ENCODE measurements at regions of chr9 and their contacts with region 1.

Region 1: GRCh38 chr9:108953983-108954574 is 19.9 kb downstream of the ABITRAM start:
- DNase-seq: peak; percentile 62
- ATAC-seq: no peak
- H3K4me3 ChIP-seq: no peak overlapping the region
- H3K4me3 Mint-ChIP-seq: no peak overlapping the region
- H3K27ac ChIP-seq: no peak overlapping the region
- H3K27ac Mint-ChIP-seq: no peak overlapping the region
- H3K4me1 ChIP-seq: no peaks in the 10 kb centered on the region
- H3K4me1 Mint-ChIP-seq: no peaks in the 10 kb centered on the region
- H3K27me3 ChIP-seq: no peaks in the 10 kb centered on the region
- H3K27me3 Mint-ChIP-seq: no peaks in the 10 kb centered on the region
- CTCF ChIP-seq: peak; percentile 86

Region 2: GRCh38 chr9:107465467-107466451 is 1488.3 kb before region 1 on chr9:
- CTCF ChIA-PET with region 1: interaction called, 12 read pairs
- POLR2A ChIA-PET with region 1: no interaction called
- intact Hi-C with region 1: no loop called
- DNase-seq: peak; percentile 64
- ATAC-seq: peak; percentile 84
- H3K4me3 ChIP-seq: peak overlapping the region; percentile 25 to 59 (median 47)
- H3K4me3 Mint-ChIP-seq: peak overlapping the region; percentile 80
- H3K27ac ChIP-seq: no peak overlapping the region
- H3K27ac Mint-ChIP-seq: no peak overlapping the region
- H3K4me1 ChIP-seq: peaks cover 13 to 15% of the 10 kb centered on the region in 2 donors
- H3K4me1 Mint-ChIP-seq: peaks cover 13% of the 10 kb centered on the region
- H3K27me3 ChIP-seq: peaks cover 0 to 25% (median 17%) of the 10 kb centered on the region in 4 experiments
- H3K27me3 Mint-ChIP-seq: peaks cover 39% of the 10 kb centered on the region
- CTCF ChIP-seq: peak; percentile 78

Region 3: GRCh38 chr9:108468402-108468801 is 485.7 kb before region 1 on chr9:
- CTCF ChIA-PET with region 1: no interaction called
- POLR2A ChIA-PET with region 1: no interaction called
- intact Hi-C with region 1: loop called (anchors 5 kb)
- DNase-seq: no peak
- ATAC-seq: no peak
- H3K4me3 ChIP-seq: no peak overlapping the region
- H3K4me3 Mint-ChIP-seq: no peak overlapping the region
- H3K27ac ChIP-seq: no peak overlapping the region
- H3K27ac Mint-ChIP-seq: no peak overlapping the region
- H3K4me1 ChIP-seq: no peaks in the 10 kb centered on the region
- H3K4me1 Mint-ChIP-seq: no peaks in the 10 kb centered on the region
- H3K27me3 ChIP-seq: no peaks in the 10 kb centered on the region
- H3K27me3 Mint-ChIP-seq: peaks cover 4% of the 10 kb centered on the region
- CTCF ChIP-seq: peak; percentile 9

Region 4: DNA sequence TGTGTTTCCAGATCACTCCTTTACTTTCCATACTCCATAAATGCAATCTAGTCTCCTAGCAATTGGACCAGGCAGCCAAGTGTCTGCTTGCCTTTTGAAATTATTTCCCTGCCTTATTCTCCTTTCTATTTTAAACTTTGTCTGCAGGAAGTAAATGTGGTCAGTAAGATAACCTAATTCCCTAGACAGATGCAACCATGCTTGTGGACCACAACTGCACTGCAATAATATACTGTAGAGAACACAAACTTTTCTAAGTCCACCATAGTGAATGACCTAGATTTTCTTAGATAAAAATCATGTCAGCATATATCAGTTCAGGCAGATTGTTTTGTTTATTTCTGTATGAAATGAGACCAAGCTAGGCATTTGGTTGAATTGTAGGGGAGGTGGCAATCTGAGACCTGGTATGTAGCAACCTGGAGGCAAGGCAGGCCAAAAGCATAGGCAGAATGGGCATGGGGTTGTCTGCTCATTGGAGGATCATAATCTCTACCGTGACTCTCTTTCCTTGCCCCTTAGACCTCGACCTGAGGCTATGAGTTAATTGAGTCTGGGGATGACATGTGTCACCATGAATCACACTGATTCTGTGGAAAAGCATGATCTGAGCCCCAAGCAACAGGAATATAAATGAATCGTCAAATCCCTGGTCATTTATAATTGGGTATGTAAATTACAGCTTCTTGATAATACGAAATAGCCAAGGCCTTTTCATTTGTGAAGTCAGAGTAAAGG is 119.0 kb before region 1 on chr9:
- CTCF ChIA-PET with region 1: no interaction called
- POLR2A ChIA-PET with region 1: no interaction called
- intact Hi-C with region 1: no loop called
- DNase-seq: no peak
- ATAC-seq: peak; percentile 28
- H3K4me3 ChIP-seq: no peak overlapping the region
- H3K4me3 Mint-ChIP-seq: peak overlapping the region; percentile 40
- H3K27ac ChIP-seq: no peak overlapping the region
- H3K27ac Mint-ChIP-seq: no peak overlapping the region
- H3K4me1 ChIP-seq: peaks cover 21 to 23% of the 10 kb centered on the region in 2 donors
- H3K4me1 Mint-ChIP-seq: peaks cover 24% of the 10 kb centered on the region
- H3K27me3 ChIP-seq: no peaks in the 10 kb centered on the region
- H3K27me3 Mint-ChIP-seq: peaks cover 5% of the 10 kb centered on the region
- CTCF ChIP-seq: no peak

Region 5: DNA sequence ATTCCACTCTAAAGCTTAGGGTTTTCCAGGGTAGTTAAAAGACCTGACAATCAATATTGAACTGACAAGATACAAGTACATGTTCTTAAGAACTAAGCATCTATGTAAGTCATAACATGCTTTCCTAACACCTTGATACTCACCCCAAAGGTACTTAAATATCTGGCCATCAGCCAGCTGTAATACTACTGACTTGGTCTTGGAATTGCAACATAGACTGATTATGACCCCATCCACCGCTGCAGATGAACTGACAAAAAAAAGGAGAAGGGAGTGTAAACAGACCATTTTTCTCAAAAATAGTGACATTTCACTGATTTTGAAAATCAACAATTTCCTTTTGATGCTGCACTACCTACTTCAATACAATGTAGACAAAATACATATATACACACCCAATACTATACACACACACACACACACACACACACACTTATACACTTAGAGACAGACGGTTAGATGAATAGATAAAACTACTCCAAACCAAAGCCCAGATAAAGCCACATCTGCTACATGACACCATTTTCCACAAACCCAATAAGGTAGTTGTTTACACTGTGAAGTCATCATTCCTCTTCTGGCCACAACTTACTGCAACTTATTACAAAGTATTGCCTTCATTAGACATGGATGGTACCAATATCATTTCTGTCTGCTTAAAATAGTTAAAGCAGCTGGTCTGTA is 50.5 kb before region 1 on chr9:
- CTCF ChIA-PET with region 1: no interaction called
- POLR2A ChIA-PET with region 1: no interaction called
- intact Hi-C with region 1: no loop called
- DNase-seq: no peak
- ATAC-seq: no peak
- H3K4me3 ChIP-seq: no peak overlapping the region
- H3K4me3 Mint-ChIP-seq: no peak overlapping the region
- H3K27ac ChIP-seq: no peak overlapping the region
- H3K27ac Mint-ChIP-seq: peak overlapping the region; percentile 3
- H3K4me1 ChIP-seq: no peaks in the 10 kb centered on the region
- H3K4me1 Mint-ChIP-seq: no peaks in the 10 kb centered on the region
- H3K27me3 ChIP-seq: no peaks in the 10 kb centered on the region
- H3K27me3 Mint-ChIP-seq: no peaks in the 10 kb centered on the region
- CTCF ChIP-seq: no peak

Measured in B cell (primary cell).